H1 (cell line): ENCODE measurements at regions of chr11 and their contacts with region 1.

Region 1: DNA sequence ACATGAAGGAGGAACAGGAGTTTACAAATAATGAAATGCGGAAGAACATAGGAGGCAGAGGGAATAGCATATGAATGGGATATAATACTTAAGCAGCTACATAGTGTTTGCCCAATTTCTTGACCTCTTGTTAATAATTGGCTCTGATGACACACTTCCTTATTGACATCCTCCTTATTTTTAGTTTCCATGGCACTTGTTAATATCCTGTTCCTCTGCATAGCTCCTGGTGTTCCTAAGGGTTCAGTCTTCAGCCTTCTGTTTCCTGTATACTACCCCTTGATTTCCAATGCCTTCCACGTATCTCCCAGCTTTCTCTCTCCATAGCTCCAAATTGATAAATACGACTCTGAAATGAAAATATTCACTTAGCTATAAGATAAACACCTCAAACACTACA is 663.8 kb upstream of the API5 start:
- DNase-seq: no peak
- H3K4me3 ChIP-seq: no peak overlapping the region
- H3K27ac ChIP-seq: no peak overlapping the region
- H3K4me1 ChIP-seq: 0 out of 7 replicates have a peak, but pooled peaks cover 0 to 4% (median 2%) of the 10 kb centered on the region in 4 experiments
- H3K27me3 ChIP-seq: no peaks in the 10 kb centered on the region
- CTCF ChIP-seq: no peak
- EP300 ChIP-seq: no peak
- POLR2A ChIP-seq: no peak
- RAD21 ChIP-seq: no peak

Region 2: DNA sequence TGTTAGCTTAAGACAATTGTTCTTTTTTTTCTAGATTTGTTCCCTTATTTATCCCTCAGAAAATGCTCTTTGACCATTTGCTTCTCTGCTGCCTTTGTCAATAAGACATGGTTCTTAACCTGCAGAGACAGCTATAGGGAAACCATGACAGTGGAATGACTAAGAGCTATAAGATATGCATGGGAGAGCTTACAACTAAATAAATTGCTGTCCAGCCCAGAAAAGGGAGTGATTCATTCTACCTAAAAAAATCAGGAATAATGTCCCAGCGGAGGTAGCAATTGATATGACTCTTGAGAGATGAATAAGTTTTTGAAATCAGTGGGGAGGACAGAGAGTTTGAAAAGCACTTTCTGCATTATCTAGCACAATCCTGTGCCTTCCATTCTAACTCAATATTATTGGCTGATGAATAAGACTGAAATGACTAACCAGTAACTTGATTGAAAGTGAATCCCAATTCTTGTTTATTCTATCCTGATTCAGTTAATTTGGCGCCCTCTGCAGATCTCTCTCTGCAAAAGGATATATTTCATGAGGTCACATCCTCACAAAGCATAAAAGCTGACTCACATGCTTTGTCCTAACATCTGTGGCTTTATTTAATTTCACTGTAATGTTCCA is 16.7 kb before region 1 on chr11:
- CTCF ChIA-PET with region 1: interaction called, 19 read pairs
- POLR2A ChIA-PET with region 1: no interaction called
- DNase-seq: no peak
- H3K4me3 ChIP-seq: no peak overlapping the region
- H3K27ac ChIP-seq: no peak overlapping the region
- H3K4me1 ChIP-seq: no peaks in the 10 kb centered on the region; a peak in 1 of 7 replicates
- H3K27me3 ChIP-seq: no peaks in the 10 kb centered on the region
- CTCF ChIP-seq: peak in 2 of 3 experiments; percentile 24 to 54; a peak in 2 of 4 replicates
- EP300 ChIP-seq: no peak
- POLR2A ChIP-seq: no peak
- RAD21 ChIP-seq: peak; percentile 56 to 60